PC-9 (cell line): ENCODE measurements at regions of chr1 and their contacts with region 1.

Region 1: DNA sequence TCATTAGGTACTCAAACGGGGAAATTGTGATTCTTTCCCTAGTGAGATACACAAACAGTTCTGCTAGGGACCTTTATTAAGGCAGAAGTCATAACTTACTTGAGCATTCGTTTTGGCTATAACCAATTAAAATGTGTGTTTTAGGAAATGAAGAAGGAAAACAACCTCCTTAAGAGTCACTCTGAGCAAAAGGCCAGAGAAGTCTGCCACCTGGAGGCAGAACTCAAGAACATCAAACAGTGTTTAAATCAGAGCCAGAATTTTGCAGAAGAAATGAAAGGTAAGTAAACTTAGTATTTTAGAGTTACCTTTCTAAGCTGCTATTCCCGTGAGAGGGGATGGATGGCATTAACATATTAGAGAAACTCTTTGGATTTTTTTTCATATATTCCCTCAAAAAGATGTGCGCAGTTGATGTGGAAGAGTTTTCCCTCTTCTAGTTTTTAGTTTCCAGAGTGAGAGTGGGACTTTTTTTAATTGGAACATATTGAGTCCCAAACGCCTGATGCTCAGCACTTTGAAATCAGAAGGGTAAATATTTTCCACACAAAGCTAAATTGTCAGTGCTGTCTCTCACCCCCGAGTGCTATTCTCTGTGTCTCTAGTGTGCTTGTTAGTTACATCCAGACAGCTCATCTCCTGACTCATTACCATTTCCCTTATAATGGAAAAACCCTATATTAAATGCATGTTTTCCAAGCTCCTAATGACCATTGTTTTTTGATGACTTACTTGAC is 34.9 kb downstream of the CENPF start:
- DNase-seq: peak in 1 of 2 experiments; percentile 9
- H3K4me3 ChIP-seq: no peak overlapping the region
- H3K27ac ChIP-seq: no peak overlapping the region
- H3K4me1 ChIP-seq: no peaks in the 10 kb centered on the region; the same call in 1 of the 2 replicates
- H3K27me3 ChIP-seq: no peaks in the 10 kb centered on the region
- CTCF ChIP-seq: peak; percentile 78

Region 2: DNA sequence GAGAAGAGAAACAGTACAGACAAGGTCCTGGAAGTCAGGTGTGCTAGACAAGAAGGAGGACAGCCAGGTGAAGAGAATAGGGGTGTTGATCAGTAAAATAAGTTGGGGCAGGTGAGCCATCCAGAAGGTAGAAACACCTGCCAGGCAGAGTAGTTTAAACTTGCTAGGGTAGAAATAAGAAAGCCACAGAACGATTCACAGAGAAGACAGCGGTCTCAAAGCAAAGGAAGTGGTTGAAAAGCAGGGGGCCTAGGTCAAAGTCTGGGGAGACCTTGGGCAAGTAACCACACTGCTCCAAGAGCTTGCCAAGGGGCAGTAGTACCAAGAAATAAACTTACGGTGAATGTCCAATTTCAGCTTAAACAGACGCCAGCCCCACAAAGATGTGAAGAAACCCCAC is 766.7 kb before region 1 on chr1:
- CTCF ChIA-PET with region 1: no interaction called
- POLR2A ChIA-PET with region 1: no interaction called
- intact Hi-C with region 1: no loop called
- DNase-seq: no peak
- H3K4me3 ChIP-seq: no peak overlapping the region
- H3K27ac ChIP-seq: no peak overlapping the region
- H3K4me1 ChIP-seq: no peaks in the 10 kb centered on the region
- H3K27me3 ChIP-seq: no peaks in the 10 kb centered on the region
- CTCF ChIP-seq: no peak

Region 3: GRCh38 chr1:214349781-214350180 is 288.1 kb before region 1 on chr1:
- CTCF ChIA-PET with region 1: interaction called, 13 read pairs
- POLR2A ChIA-PET with region 1: no interaction called
- intact Hi-C with region 1: no loop called
- DNase-seq: peak in 1 of 2 experiments; percentile 59
- H3K4me3 ChIP-seq: no peak overlapping the region
- H3K27ac ChIP-seq: no peak overlapping the region
- H3K4me1 ChIP-seq: no peaks in the 10 kb centered on the region
- H3K27me3 ChIP-seq: no peaks in the 10 kb centered on the region
- CTCF ChIP-seq: no peak

Region 4: GRCh38 chr1:215599418-215600074 is 961.7 kb after region 1 on chr1:
- CTCF ChIA-PET with region 1: no interaction called
- POLR2A ChIA-PET with region 1: interaction called, 10 read pairs
- intact Hi-C with region 1: no loop called
- DNase-seq: no peak
- H3K4me3 ChIP-seq: no peak overlapping the region
- H3K27ac ChIP-seq: peak overlapping the region; percentile 23; the same call in 1 of the 2 replicates
- H3K4me1 ChIP-seq: peaks cover 18% of the 10 kb centered on the region
- H3K27me3 ChIP-seq: no peaks in the 10 kb centered on the region
- CTCF ChIP-seq: no peak